Caco-2 (cell line): ENCODE measurements at regions of chr2 and their contacts with region 1.

Region 1: DNA sequence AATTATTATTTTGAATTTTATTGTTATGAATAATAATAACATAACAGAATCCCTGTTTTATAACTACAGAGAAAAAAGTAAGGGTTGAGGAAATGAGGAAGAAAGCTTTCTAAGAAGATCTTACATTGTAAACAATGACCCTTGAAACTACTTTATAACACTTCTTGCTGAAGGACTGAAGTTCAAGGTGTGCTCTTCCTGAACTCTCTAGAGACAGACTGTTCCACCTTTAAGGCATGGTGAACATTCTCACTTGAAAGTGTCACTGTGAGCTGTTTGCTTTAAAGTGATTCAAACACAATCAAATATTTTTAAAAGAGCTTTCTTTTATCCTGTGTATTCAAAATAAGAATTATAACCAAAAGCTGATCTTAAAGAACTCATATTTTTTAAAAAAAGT is 131.5 kb downstream of the DNAH7 start:
- DNase-seq: no peak
- H3K4me3 ChIP-seq: no peak overlapping the region
- H3K4me3 Mint-ChIP-seq: no peak overlapping the region
- H3K27ac Mint-ChIP-seq: no peak overlapping the region
- H3K4me1 ChIP-seq: no peaks in the 10 kb centered on the region
- H3K4me1 Mint-ChIP-seq: no peaks in the 10 kb centered on the region
- H3K27me3 ChIP-seq: no peaks in the 10 kb centered on the region
- H3K27me3 Mint-ChIP-seq: no peaks in the 10 kb centered on the region
- CTCF ChIP-seq: no peak

Region 2: DNA sequence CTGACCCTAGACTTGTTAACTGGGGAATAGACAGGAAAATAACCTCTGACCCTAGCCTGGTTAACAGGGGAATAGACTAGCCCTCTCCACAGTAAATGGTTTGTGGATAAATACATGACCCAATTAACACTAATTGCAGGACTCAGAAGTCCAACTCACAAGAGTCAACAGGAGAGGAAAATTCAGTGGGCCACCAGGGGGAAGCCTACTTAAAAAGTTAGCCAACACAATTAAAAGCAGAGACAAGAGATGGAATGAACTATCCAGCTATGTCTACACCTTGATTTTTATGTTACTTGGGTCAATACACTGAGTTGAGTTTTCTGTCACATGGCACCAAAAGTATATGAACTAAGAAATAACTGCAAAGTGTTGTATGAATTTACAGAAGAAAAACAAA is 439.0 kb before region 1 on chr2:
- CTCF ChIA-PET with region 1: no interaction called
- POLR2A ChIA-PET with region 1: no interaction called
- intact Hi-C with region 1: loop called (anchors 1 kb)
- DNase-seq: peak; percentile 52 to 54
- H3K4me3 ChIP-seq: no peak overlapping the region
- H3K4me3 Mint-ChIP-seq: no peak overlapping the region
- H3K27ac Mint-ChIP-seq: no peak overlapping the region
- H3K4me1 ChIP-seq: no peaks in the 10 kb centered on the region
- H3K4me1 Mint-ChIP-seq: no peaks in the 10 kb centered on the region
- H3K27me3 ChIP-seq: no peaks in the 10 kb centered on the region
- H3K27me3 Mint-ChIP-seq: peaks cover 4% of the 10 kb centered on the region
- CTCF ChIP-seq: peak; percentile 45 to 51

Region 3: GRCh38 chr2:195912079-195912478 is 25.1 kb before region 1 on chr2:
- CTCF ChIA-PET with region 1: no interaction called
- POLR2A ChIA-PET with region 1: no interaction called
- intact Hi-C with region 1: no loop called
- DNase-seq: no peak
- H3K4me3 ChIP-seq: no peak overlapping the region
- H3K4me3 Mint-ChIP-seq: no peak overlapping the region
- H3K27ac Mint-ChIP-seq: no peak overlapping the region
- H3K4me1 ChIP-seq: no peaks in the 10 kb centered on the region
- H3K4me1 Mint-ChIP-seq: no peaks in the 10 kb centered on the region
- H3K27me3 ChIP-seq: no peaks in the 10 kb centered on the region
- H3K27me3 Mint-ChIP-seq: no peaks in the 10 kb centered on the region
- CTCF ChIP-seq: no peak